ENCODE measurements at regions of chr9 and their contacts with region 1.

Region 1: DNA sequence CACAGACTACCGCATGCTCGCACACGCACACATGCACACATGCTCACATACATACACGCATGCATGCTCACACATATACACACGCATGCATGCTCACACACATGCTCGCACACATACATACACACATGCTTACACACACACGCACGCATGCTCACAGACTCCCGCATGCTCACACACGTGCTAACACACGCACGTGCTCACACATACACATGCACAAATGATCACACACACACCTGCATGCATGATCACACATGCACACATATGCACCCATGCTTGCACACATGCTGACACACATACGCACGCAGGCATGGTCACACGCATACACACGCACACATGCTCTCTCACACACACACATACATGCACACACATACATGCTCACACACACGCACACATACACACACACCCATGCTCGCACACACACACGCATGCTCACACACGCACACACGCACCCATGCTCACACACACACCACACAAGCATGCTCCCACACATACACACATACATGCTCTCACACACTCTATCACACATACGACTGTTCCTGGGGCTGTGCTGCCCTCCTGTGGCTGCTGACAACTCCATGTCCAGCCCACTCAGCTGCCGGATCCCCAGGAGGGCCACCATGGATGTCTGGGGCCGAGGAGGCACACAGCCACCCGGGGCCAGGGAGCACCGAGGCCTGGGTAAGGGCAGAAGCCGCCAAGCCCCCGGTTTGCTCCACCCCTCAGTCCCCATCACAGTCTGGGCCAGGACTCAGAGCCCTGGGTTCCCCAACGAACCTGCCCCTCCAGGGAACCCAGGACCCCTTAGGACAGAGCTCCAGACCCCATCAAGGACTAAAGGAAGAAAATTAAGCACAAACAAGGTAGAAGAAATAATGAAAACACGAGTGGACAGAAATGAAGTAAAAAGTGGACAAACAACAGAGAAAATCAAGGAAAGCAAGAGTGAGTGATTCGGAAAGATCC is 31.4 kb upstream of the EGFL7 start:
- DNase-seq: no peak
- H3K4me3 ChIP-seq: no peak overlapping the region
- H3K27ac ChIP-seq: no peak overlapping the region
- H3K4me1 ChIP-seq: peaks cover 9 to 59% (median 20%) of the 10 kb centered on the region in 3 donors
- H3K27me3 ChIP-seq: peaks cover 0 to 15% (median 0%) of the 10 kb centered on the region in 4 donors
- CTCF ChIP-seq: peak; percentile 65 to 92 (median 85)
- POLR2A ChIP-seq: no peak

Region 2: GRCh38 chr9:136483589-136484152 is 147.6 kb before region 1 on chr9:
- intact Hi-C with region 1: loop called (anchors 2 kb)
- DNase-seq: peak; percentile 79
- H3K4me3 ChIP-seq: peak overlapping the region; percentile 46 to 99 (median 79)
- H3K27ac ChIP-seq: peak overlapping the region; percentile 99 to 100 (median 100)
- H3K4me1 ChIP-seq: peaks cover 25 to 54% (median 28%) of the 10 kb centered on the region in 3 donors
- H3K27me3 ChIP-seq: peaks cover 0 to 9% (median 0%) of the 10 kb centered on the region in 4 donors
- CTCF ChIP-seq: peak in 1 of 6 experiments; percentile 11
- POLR2A ChIP-seq: peak in 3 of 4 donors; percentile 42 to 75 (median 73)

Region 3: DNA sequence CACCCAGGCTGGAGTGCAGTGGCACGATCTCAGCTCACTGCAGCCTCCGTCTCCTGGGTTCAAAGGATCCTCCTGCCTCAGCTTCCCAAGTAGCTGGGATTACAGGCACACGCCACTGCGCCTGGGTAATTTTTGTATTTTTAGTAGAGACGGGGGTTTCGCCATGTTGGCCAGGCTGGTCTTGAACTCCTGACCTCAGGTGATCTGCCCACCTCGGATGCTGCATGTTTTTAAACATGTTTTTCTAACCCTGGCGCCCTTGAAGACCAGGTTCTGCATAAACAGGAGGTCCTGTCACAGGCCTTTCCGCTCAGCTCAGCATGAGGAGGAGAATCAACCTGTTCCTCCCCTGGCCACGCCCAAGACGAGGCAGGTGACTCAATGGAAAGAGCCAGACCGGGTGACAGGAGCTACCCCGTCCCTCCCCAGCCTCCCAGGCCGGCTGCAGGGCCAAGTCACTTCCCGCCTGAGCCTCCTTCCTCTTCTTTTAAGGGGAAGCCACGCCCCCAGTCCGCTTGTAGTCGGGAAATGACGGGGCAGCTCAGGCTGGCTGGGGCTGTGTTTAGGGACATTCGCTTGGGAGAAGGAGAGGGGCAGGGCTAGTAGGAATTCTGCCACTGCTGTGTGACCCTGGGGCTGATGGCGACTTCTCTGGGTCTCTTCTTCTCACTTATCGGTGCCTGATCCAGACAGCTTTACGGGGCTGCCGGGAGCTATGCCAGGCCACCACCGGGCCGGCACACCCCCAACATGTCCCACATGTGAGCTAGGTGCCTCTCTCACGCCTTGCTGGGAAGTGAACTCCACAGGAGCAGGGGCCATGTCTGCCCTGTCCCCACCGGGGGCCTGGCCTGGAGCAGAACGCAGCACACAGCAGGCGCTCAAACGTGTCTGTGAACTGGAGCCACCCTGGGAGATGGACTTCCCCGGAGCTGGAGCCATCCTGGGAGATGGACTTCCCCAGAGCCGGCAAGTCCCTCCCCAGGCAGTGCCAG is 91.6 kb before region 1 on chr9:
- intact Hi-C with region 1: loop called (anchors 5 kb)
- DNase-seq: peak; percentile 86
- H3K4me3 ChIP-seq: peak overlapping the region in 3 of 4 donors; percentile 5 to 57 (median 22)
- H3K27ac ChIP-seq: peak overlapping the region; percentile 85 to 94 (median 92)
- H3K4me1 ChIP-seq: peaks cover 65 to 97% (median 89%) of the 10 kb centered on the region in 3 donors
- H3K27me3 ChIP-seq: no peaks in the 10 kb centered on the region
- CTCF ChIP-seq: no peak
- POLR2A ChIP-seq: peak in 1 of 4 donors; percentile 62